BJ (cell line): ENCODE measurements at regions of chr1 and their contacts with region 1.

Region 1: GRCh38 chr1:235328357-235329138 is at the start of gene GGPS1:
- DNase-seq: peak; percentile 99
- H3K4me3 ChIP-seq: peak within 1 kb of the TSS; percentile 94
- H3K27me3 ChIP-seq: no peaks in the 10 kb centered on the region
- CTCF ChIP-seq: 0 out of 2 replicates have a peak, but pooled peaks have one; percentile 4
- polyA plus RNA-seq, gene GGPS1: 18.8 and 37.3 TPM in 2 replicates

Region 2: DNA sequence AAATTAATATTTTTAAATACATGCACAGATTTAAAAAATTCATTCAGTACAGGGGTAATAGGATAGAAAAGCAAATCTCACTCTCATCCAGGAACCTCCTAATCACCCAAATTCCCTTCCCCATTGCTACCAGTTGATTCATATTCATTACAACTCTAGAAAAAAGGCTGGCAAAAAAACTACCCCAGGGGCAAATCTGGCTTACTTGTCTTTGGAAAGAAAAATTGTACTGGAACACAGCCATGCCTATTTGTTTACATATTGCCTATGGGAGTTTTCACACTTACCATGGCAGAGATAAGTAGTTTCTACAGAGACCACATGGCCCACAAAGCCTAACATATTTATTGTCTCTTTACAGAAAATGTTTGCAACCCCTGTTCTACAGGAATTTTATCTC is 158.6 kb before region 1 on chr1:
- CTCF ChIA-PET with region 1: no interaction called
- POLR2A ChIA-PET with region 1: no interaction called
- DNase-seq: no peak
- H3K4me3 ChIP-seq: no peak overlapping the region
- H3K27me3 ChIP-seq: no peaks in the 10 kb centered on the region
- CTCF ChIP-seq: no peak

Region 3: DNA sequence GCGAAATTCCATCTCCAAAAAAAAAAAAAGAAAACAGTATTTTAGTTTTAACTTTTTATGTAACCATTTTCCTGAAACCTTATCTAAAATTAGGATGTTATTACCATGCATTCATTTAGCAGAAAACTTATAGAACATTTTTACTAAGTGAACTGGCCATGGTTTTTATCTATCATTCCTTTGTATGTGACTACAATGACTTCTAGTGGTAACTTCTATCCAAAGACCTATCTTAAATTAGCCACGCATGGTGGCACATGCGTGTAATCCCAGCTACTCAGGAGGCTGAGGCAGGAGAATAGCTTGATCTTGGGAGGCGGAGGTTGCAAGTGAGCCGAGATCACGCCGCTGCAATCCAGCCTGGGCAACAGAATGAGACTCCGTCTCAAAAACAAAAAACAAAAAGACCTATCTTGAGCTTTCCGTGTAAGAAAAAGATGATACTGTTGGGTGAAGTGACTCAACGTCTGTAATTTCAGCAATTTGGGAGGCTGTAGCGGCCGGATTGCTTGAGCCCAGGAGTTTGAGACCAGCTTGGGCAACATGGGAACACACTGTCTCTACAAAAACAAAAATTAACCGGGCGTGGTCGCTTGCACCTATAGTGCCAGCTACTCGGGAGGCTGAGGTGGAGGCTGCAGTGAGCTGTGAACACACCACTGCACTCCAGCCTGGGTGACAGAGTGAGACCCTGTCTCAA is 11.3 kb after region 1 on chr1:
- CTCF ChIA-PET with region 1: interaction called, 14 read pairs
- POLR2A ChIA-PET with region 1: interaction called, 5 read pairs
- DNase-seq: no peak
- H3K4me3 ChIP-seq: no peak overlapping the region
- H3K27me3 ChIP-seq: no peaks in the 10 kb centered on the region
- CTCF ChIP-seq: no peak

Region 4: DNA sequence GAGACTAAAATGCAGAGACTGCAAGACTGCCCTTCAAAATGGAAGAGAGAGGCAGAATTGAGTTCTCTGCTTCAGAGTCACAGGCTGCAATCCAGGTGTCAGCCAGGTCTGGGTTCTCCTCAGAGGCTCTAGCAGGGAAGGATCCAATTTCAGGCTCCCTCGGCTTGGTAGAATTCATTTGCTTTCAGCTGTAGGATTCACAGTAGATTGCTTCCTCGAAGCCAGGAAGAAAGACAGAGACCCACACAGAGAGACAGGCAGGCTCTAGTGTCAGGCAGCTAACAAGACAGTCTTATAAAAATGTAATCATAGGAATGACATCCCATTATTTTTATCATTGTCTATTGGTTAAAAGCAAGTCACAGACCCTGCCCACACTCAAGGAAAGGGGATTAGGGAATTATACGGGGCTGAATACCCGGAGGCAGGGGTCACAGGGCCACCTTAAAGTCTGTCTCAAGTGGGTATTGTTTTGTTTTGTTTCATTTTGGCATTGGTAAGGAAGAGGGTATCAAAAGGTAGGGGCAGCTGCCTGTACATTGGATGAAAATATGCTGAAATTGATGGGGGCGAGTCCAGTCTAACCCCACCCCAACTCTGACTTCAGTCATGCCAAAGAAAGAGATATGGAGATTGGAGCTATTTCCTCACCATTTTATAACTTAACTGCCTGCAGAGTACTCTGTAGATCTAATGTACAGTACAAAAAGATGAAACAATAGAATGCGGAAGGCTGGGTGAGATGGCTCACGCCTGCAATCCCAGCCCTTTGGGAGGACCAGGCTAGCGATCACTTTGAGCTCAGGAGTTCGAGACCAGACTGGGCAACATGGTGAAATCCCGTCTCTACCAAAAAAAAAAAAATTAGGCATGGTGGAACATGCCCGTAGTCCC is 29.2 kb after region 1 on chr1:
- CTCF ChIA-PET with region 1: interaction called, 5 read pairs
- POLR2A ChIA-PET with region 1: interaction called, 12 read pairs
- DNase-seq: no peak
- H3K4me3 ChIP-seq: no peak overlapping the region
- H3K27me3 ChIP-seq: no peaks in the 10 kb centered on the region
- CTCF ChIP-seq: no peak